Panc1 (cell line): ENCODE measurements at regions of chr1 and their contacts with region 1.

Region 1: DNA sequence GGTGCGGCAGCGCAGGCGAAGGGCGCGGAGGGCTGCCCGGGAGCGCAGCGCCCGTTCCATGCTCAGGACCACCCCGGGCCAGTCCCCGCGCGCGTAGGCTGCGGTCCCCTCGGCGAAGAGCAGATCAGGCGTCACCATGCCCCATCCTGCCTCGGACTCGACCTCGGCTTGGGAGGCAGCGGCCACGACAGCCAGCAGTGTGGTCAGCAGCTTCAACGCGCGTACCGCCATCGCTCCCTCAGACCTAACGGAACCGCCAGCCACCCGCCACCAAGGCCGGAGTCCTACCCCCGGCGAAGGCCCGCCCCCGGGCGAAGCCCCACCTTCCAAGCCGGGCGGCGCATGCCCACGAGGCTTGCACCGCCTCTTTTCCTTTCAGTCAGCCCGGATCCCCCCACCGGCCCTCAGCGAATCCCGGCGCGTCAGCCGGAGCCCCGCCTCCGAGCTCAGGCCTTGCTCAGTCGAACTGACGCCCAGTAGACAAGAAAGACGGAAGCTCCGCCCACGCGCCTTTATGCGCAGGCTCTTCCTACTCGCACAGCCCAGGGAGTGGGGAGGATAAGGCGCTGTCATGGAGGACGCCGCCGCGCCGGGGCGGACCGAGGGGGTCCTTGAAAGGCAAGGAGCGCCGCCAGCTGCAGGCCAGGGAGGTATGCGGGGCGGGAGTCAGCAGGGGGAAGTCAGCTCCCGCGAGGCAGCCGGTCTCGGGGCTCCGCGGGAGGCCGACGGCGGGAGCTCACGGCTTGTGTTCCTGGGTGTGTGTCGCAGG is at the starts of genes C1orf50 and P3H1:
- DNase-seq: peak; percentile 97
- ATAC-seq: peak; percentile 96
- H3K4me3 ChIP-seq: peak within 1 kb of the TSS; percentile 90 to 99
- H3K27ac ChIP-seq: peak within 1 kb of the TSS; percentile 88
- H3K4me1 ChIP-seq: peaks cover 17% of the 10 kb centered on the region
- H3K27me3 ChIP-seq: no peaks in the 10 kb centered on the region
- CTCF ChIP-seq: no peak
- total RNA-seq, gene C1orf50: 5.8 TPM
- total RNA-seq, gene P3H1: 84.8 TPM

Region 2: DNA sequence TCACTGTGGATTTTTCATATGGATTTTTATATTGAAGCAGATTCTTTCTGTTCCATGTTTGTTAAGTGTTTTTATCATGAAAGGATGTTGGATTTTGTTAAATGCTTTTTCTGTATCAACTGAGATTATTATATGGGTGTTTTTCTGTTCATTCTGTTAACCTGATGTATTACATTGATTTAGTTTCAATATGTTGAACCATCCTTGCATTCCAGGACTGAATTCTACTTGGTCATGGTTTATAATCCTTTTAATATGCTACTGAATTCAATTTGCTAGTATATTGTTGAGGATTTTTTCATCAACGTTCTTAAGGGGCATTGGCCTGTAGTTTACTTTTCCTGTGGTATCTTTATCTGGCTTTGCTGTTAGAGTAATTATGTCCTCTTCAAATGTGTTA is 248.0 kb before region 1 on chr1:
- CTCF ChIA-PET with region 1: interaction called, 10 read pairs
- POLR2A ChIA-PET with region 1: no interaction called
- in situ Hi-C with region 1: no loop called
- intact Hi-C with region 1: no loop called
- DNase-seq: no peak
- ATAC-seq: no peak
- H3K4me3 ChIP-seq: no peak overlapping the region
- H3K27ac ChIP-seq: no peak overlapping the region
- H3K4me1 ChIP-seq: no peaks in the 10 kb centered on the region
- H3K27me3 ChIP-seq: no peaks in the 10 kb centered on the region
- CTCF ChIP-seq: no peak

Region 3: DNA sequence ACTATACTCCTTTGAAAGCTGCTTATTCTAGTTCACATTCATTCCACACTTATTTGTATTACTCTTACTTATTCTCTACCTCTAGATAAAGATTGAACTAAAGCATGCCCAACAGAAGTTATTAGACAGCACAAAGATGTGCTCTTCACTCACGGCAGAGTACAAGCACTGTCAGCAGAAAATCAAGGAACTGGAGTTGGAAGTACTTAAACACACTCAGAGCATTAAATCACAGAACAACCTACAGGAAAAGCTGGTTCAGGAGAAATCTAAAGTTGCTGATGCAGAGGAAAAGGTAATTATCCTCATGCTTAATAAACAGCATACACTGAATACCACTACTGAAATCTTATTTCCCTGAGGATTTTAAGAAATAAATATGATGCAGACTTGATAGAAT is 190.0 kb before region 1 on chr1:
- CTCF ChIA-PET with region 1: interaction called, 10 read pairs
- POLR2A ChIA-PET with region 1: no interaction called
- in situ Hi-C with region 1: no loop called
- intact Hi-C with region 1: no loop called
- DNase-seq: no peak
- ATAC-seq: no peak
- H3K4me3 ChIP-seq: no peak overlapping the region
- H3K27ac ChIP-seq: no peak overlapping the region
- H3K4me1 ChIP-seq: no peaks in the 10 kb centered on the region
- H3K27me3 ChIP-seq: peaks cover 2% of the 10 kb centered on the region
- CTCF ChIP-seq: no peak

Region 4: DNA sequence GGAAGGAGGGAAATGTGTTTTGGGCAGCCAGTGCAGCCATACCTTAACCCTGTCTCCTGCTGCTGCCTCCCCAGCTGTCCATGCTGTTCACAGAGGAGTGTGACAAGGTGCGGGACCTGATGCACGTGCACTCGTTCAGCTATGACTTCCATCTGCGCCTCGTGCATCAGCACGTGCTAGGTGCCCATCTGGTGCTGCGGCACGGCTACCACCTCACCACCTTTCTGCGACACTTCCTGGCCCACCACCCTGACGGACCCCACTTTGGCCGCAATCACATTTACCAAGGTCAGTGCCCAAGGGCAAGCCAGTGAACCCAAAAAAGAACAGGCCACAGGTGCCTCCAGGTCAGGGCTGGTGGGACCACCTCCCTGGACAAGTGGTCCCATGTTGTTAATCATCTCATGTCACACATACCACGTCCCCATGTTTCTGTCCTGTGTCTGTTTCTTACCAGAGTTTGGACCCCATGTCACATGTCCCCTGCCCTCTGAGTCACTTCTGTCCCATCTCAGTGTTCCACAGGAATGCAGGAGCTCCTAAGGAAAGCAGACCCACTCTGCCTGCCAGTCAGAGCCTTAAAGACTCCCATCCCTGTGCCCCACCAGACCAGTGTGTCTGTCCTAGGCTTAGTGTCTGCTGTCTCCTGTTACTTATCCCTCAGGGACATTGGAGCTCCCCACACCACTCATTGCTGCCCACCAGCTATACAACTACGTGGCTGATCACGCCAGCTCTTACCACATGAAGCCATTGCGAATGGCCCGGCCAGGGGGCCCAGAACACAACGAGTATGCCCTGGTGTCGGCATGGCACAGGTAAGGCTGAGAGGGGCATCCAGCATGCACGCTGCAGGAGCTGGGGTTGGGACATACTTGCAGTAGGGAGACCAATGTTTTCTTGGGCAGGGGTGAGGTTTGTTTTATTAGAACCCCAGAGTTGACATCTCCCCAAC is 680.2 kb after region 1 on chr1:
- CTCF ChIA-PET with region 1: interaction called, 12 read pairs
- POLR2A ChIA-PET with region 1: no interaction called
- in situ Hi-C with region 1: no loop called
- intact Hi-C with region 1: no loop called
- DNase-seq: no peak
- ATAC-seq: no peak
- H3K4me3 ChIP-seq: no peak overlapping the region
- H3K27ac ChIP-seq: no peak overlapping the region
- H3K4me1 ChIP-seq: no peaks in the 10 kb centered on the region
- H3K27me3 ChIP-seq: no peaks in the 10 kb centered on the region
- CTCF ChIP-seq: no peak